PC-3 (cell line): ENCODE measurements at regions of chr19 and their contacts with region 1.

Region 1: GRCh38 chr19:53333463-53334449 is at the start of gene ZNF845:
- DNase-seq: peak; percentile 96
- ATAC-seq: peak; percentile 99
- H3K4me3 ChIP-seq: peak within 1 kb of the TSS; percentile 79
- H3K27ac ChIP-seq: peak within 1 kb of the TSS; percentile 12
- H3K4me1 ChIP-seq: no peaks in the 10 kb centered on the region
- H3K27me3 ChIP-seq: no peaks in the 10 kb centered on the region
- CTCF ChIP-seq: no peak
- total RNA-seq, gene ZNF845: 4.4 and 6.6 TPM in 2 replicates

Region 2: GRCh38 chr19:53254411-53255341 is 79.1 kb before region 1 on chr19 and contains the start of gene ZNF677:
- CTCF ChIA-PET with region 1: no interaction called
- POLR2A ChIA-PET with region 1: no interaction called
- intact Hi-C with region 1: loop called (anchors 2 kb)
- DNase-seq: peak; percentile 65
- ATAC-seq: peak; percentile 99
- H3K4me3 ChIP-seq: peak within 1 kb of the TSS; percentile 82
- H3K27ac ChIP-seq: no peak within 1 kb of the TSS
- H3K4me1 ChIP-seq: no peaks in the 10 kb centered on the region
- H3K27me3 ChIP-seq: no peaks in the 10 kb centered on the region
- CTCF ChIP-seq: no peak
- total RNA-seq, gene ZNF677: 8.0 and 14.1 TPM in 2 replicates

Region 3: DNA sequence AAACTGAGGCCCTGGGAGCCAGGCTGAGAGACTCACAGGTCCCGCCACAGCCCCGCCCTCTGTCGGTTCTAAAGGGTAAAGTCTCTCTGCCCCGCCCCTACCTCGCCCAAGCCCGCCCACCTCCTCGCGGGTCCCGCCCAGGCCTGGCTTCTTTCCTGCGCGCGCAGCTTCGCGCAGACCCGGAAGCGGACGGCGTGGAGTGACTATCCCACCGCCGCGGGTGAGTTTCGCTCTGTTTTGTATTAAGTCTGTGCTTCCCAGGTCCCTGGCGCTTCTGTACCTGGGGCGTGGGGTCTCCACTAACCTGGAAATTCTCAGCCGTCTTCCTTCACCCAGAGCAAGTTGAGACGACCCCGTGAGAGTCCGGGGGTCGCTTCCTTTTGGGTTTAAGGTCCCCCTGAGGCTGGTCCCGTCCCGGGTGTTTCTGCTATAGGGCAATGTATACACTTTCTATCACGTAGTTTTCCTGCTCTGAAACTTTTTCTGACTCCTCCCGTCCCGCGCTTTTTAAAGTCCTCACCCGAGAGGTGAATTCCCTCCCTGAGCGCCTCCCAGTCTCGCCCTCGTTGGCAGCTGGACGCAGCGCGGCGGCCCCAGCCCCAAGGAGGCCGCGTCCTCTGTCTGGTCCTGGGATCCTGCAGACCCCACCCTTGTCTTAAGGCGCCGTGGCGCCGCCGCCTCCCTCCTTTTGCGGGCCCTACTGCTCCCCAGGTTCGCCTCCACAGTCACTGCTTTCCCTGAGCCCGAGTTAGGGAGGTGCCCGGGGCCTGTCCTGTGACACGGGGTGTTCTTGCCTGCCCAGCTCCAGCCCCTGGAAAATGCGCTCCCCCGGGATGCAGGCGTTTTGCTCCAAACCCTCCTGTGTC is 61.5 kb after region 1 on chr19 and contains the start of gene ZNF765:
- CTCF ChIA-PET with region 1: no interaction called
- POLR2A ChIA-PET with region 1: no interaction called
- intact Hi-C with region 1: loop called (anchors 2 kb)
- DNase-seq: peak; percentile 94
- ATAC-seq: peak; percentile 88
- H3K4me3 ChIP-seq: peak within 1 kb of the TSS; percentile 87
- H3K27ac ChIP-seq: peak within 1 kb of the TSS; percentile 51
- H3K4me1 ChIP-seq: peaks cover 7% of the 10 kb centered on the region; the same call in 1 of the 2 replicates
- H3K27me3 ChIP-seq: no peaks in the 10 kb centered on the region
- CTCF ChIP-seq: peak; percentile 41
- total RNA-seq, gene ZNF765: 9.6 and 11.4 TPM in 2 replicates